ENCODE measurements at regions of chr3 and their contacts with region 1.

Region 1: GRCh38 chr3:163468531-163469335 is 1609.6 kb downstream of the SI start:
- DNase-seq: no peak
- ATAC-seq: no peak
- H3K4me3 ChIP-seq: no peak overlapping the region
- H3K4me3 Mint-ChIP-seq: no peak overlapping the region
- H3K27ac ChIP-seq: no peak overlapping the region
- H3K27ac Mint-ChIP-seq: no peak overlapping the region
- H3K4me1 ChIP-seq: no peaks in the 10 kb centered on the region
- H3K4me1 Mint-ChIP-seq: no peaks in the 10 kb centered on the region
- H3K27me3 ChIP-seq: no peaks in the 10 kb centered on the region
- H3K27me3 Mint-ChIP-seq: no peaks in the 10 kb centered on the region
- CTCF ChIP-seq: no peak

Region 2: DNA sequence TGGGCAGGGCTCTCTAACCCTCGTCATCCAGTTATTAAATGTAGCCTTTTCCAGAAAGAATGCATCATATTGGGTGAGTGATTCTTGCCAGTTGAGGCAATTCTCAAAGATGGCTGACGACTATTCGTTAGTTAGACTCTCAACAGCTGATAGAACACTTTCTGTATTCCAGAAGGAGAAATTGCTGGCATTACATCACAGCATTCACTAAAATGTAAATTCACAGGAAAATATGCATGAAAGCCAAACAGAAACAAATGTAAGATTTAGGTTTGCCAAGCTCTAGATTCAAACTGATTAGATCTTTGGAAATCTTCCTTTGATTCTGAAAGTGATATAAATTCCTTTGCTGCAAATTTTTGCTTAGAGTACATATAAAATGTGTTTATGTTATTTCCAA is 108.5 kb after region 1 on chr3:
- intact Hi-C with region 1: loop called (anchors 5 kb)
- DNase-seq: no peak
- ATAC-seq: no peak
- H3K4me3 ChIP-seq: no peak overlapping the region
- H3K4me3 Mint-ChIP-seq: no peak overlapping the region
- H3K27ac ChIP-seq: no peak overlapping the region
- H3K27ac Mint-ChIP-seq: no peak overlapping the region
- H3K4me1 ChIP-seq: no peaks in the 10 kb centered on the region
- H3K4me1 Mint-ChIP-seq: no peaks in the 10 kb centered on the region
- H3K27me3 ChIP-seq: no peaks in the 10 kb centered on the region
- H3K27me3 Mint-ChIP-seq: no peaks in the 10 kb centered on the region
- CTCF ChIP-seq: no peak